Activated CD4-positive, alpha-beta T cell treated with anti-CD3 and anti-CD28 coated beads for 36 hours (primary cell): ENCODE measurements at regions of chr12 and their contacts with region 1.

Region 1: GRCh38 chr12:132925597-132926416 is 30.3 kb downstream of the ZNF605 start:
- DNase-seq: no peak
- ATAC-seq: no peak
- H3K4me3 Mint-ChIP-seq: no peak overlapping the region
- H3K27ac Mint-ChIP-seq: no peak overlapping the region
- H3K4me1 Mint-ChIP-seq: no peaks in the 10 kb centered on the region
- H3K27me3 Mint-ChIP-seq: no peaks in the 10 kb centered on the region

Region 2: DNA sequence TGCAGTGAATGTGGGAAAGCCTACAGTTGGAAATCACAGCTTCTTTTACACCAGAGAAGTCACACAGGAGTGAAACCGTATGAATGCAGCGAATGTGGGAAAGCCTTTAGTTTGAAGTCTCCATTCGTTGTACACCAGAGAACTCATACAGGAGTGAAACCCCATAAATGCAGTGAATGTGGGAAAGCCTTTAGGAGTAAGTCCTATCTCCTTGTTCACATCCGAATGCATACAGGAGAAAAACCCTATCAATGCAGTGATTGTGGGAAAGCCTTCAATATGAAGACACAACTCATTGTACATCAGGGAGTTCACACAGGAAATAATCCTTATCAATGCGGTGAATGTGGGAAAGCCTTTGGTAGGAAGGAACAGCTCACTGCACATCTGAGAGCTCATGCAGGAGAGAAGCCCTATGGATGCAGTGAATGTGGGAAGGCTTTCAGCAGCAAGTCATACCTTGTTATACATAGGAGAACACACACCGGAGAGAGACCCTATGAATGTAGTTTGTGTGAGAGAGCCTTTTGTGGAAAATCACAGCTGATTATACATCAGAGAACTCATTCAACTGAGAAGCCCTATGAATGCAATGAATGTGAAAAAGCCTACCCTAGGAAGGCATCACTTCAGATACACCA is 85.0 kb after region 1 on chr12:
- CTCF ChIA-PET with region 1: no interaction called
- POLR2A ChIA-PET with region 1: no interaction called
- intact Hi-C with region 1: loop called in 1 of 2 experiments (anchors 5 kb)
- DNase-seq: no peak
- ATAC-seq: no peak
- H3K4me3 Mint-ChIP-seq: no peak overlapping the region
- H3K27ac Mint-ChIP-seq: no peak overlapping the region
- H3K4me1 Mint-ChIP-seq: no peaks in the 10 kb centered on the region
- H3K27me3 Mint-ChIP-seq: no peaks in the 10 kb centered on the region

Region 3: GRCh38 chr12:133106253-133106652 is 180.4 kb after region 1 on chr12:
- CTCF ChIA-PET with region 1: no interaction called
- POLR2A ChIA-PET with region 1: no interaction called
- intact Hi-C with region 1: loop called in 1 of 2 experiments (anchors 5 kb)
- DNase-seq: no peak
- ATAC-seq: no peak
- H3K4me3 Mint-ChIP-seq: no peak overlapping the region
- H3K27ac Mint-ChIP-seq: no peak overlapping the region
- H3K4me1 Mint-ChIP-seq: peaks cover 2% of the 10 kb centered on the region
- H3K27me3 Mint-ChIP-seq: no peaks in the 10 kb centered on the region